Endothelial cell of umbilical vein (primary cell): ENCODE measurements at regions of chr6 and their contacts with region 1.

Region 1: DNA sequence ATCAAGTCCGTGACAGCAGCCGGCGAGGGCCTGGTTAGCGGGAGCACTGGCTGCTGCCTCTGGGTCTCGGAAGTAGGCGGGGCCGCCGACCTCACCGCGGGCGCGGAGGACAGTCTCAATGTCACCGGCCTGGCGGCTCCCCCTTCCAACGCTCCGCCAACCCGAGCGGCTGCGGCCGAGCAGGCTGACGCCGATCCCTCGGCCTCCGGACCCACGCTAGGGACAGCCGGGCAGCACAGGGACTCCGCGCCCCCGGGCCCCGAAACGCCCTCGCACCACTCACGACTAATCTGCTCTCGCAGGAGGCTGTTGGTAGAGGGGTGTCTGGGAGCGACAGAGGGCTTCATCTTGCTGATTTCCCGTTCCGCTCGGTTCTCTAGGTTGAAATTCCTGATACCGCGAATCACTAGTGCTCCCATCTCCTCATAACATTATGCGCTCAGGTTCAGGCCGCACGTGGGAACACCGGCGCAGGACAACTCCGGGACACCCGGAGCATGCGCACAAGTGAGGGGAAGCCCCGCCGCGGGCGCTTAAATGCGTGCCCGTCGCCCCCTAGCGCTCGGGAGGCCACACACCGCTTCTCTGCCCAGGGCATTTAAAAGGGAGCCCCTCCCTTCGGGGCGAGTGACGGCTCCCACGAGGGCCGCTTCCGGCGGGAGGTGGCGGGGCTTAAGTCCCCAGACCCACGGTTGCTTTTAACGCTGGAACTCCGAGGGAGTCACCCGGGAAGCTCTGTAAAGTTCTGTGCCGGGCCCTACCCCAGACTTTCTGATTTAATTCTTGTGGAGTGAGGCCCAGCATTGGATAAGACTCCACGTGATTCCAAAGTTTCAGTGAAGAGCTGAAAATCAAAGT is at the start of gene NDUFAF4:
- DNase-seq: peak; percentile 96
- H3K4me3 ChIP-seq: peak within 1 kb of the TSS; percentile 79 to 99 (median 91)
- H3K27ac ChIP-seq: peak within 1 kb of the TSS; percentile 95
- H3K4me1 ChIP-seq: peaks cover 25% of the 10 kb centered on the region
- H3K27me3 ChIP-seq: peaks cover 0 to 2% of the 10 kb centered on the region in 2 experiments
- CTCF ChIP-seq: peak; percentile 94 to 97
- POLR2A ChIP-seq: no peak
- total RNA-seq, gene NDUFAF4: 39.8 and 44.6 TPM in 2 replicates

Region 2: DNA sequence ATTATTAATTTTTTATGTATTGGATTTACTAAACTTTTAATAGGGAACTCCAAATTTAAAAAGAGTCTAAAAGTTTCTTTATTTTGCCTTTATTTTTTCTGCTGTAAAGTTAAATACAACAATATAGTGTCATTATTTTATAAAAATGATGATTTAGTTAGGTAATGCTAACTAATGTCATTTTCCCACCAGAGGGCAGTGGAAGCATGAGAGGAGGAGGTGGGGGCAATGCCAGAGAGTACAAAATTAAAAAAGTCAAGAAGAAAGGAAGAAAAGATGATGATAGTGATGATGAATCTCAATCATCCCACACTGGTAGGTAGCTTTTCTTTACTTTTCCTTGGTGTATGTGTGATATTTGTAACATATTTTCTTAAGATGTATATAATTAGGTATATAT is 354.9 kb before region 1 on chr6:
- CTCF ChIA-PET with region 1: no interaction called
- POLR2A ChIA-PET with region 1: no interaction called
- dilution Hi-C with region 1: no loop called
- intact Hi-C with region 1: loop called (anchors 2 kb)
- DNase-seq: no peak
- H3K4me3 ChIP-seq: no peak overlapping the region
- H3K27ac ChIP-seq: no peak overlapping the region
- H3K4me1 ChIP-seq: no peaks in the 10 kb centered on the region
- H3K27me3 ChIP-seq: no peaks in the 10 kb centered on the region
- CTCF ChIP-seq: peak in 1 of 2 donors; percentile 13
- POLR2A ChIP-seq: no peak

Region 3: DNA sequence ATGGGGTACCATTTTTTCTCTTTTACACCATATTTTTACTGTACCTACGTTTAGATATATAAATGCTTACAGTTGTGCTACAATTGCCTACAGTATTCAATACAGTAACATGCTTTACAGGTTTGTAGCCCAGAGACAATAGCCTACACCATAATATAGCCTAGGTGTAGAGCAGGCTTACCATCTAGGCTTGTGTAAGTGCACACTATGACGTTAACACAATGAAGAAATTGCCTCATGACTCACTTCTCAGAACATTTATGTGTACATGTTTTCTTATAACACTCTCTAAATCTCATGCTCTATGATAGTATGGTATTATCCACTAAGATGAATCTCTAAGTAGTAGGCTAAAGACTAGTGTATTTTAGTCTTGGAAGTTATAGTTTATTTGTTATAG is 73.9 kb before region 1 on chr6:
- CTCF ChIA-PET with region 1: no interaction called
- POLR2A ChIA-PET with region 1: no interaction called
- dilution Hi-C with region 1: no loop called
- intact Hi-C with region 1: no loop called
- DNase-seq: no peak
- H3K4me3 ChIP-seq: no peak overlapping the region
- H3K27ac ChIP-seq: no peak overlapping the region
- H3K4me1 ChIP-seq: no peaks in the 10 kb centered on the region
- H3K27me3 ChIP-seq: no peaks in the 10 kb centered on the region
- CTCF ChIP-seq: no peak
- POLR2A ChIP-seq: no peak

Region 4: GRCh38 chr6:96923871-96924493 is 26.4 kb after region 1 on chr6:
- CTCF ChIA-PET with region 1: interaction called, 12 read pairs
- POLR2A ChIA-PET with region 1: no interaction called
- dilution Hi-C with region 1: no loop called
- intact Hi-C with region 1: loop called (anchors 2 kb)
- DNase-seq: peak; percentile 14
- H3K4me3 ChIP-seq: peak overlapping the region in 2 of 3 experiments; percentile 13 to 61
- H3K27ac ChIP-seq: no peak overlapping the region
- H3K4me1 ChIP-seq: peaks cover 4% of the 10 kb centered on the region
- H3K27me3 ChIP-seq: peaks cover 29 to 72% of the 10 kb centered on the region in 2 experiments
- CTCF ChIP-seq: no peak
- POLR2A ChIP-seq: no peak

Region 5: DNA sequence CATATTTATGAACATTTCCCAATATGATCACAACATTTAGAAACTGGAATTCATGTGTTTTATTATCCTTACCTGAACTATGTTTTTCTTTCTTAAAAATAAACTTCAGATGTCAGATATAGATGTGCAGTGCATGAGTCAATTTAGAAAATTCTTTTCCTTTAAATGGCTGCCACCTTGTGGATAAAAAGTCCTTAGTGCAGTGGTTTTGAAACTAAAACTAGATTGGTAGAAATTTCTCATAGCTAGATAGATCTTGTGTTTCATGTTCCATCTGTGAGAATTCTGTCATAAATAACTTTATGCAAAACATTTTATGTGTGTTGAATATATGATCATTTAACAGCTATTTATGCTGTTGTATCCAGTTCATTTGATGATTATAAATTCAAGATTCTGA is 161.9 kb after region 1 on chr6:
- CTCF ChIA-PET with region 1: interaction called, 106 read pairs
- POLR2A ChIA-PET with region 1: no interaction called
- dilution Hi-C with region 1: no loop called
- intact Hi-C with region 1: loop called (anchors 1 kb)
- DNase-seq: peak; percentile 30
- H3K4me3 ChIP-seq: no peak overlapping the region
- H3K27ac ChIP-seq: no peak overlapping the region
- H3K4me1 ChIP-seq: no peaks in the 10 kb centered on the region
- H3K27me3 ChIP-seq: peaks cover 10 to 13% of the 10 kb centered on the region in 2 experiments
- CTCF ChIP-seq: peak; percentile 13 to 21
- POLR2A ChIP-seq: no peak

Region 6: GRCh38 chr6:97282726-97283617 is 385.4 kb after region 1 on chr6 and contains the start of gene MMS22L:
- CTCF ChIA-PET with region 1: no interaction called
- POLR2A ChIA-PET with region 1: no interaction called
- dilution Hi-C with region 1: no loop called
- intact Hi-C with region 1: loop called (anchors 5 kb)
- DNase-seq: peak; percentile 95
- H3K4me3 ChIP-seq: peak within 1 kb of the TSS; percentile 75 to 93 (median 86)
- H3K27ac ChIP-seq: peak within 1 kb of the TSS; percentile 60
- H3K4me1 ChIP-seq: peaks cover 21% of the 10 kb centered on the region
- H3K27me3 ChIP-seq: no peaks in the 10 kb centered on the region
- CTCF ChIP-seq: no peak
- POLR2A ChIP-seq: no peak
- total RNA-seq, gene MMS22L: 19.3 and 22.7 TPM in 2 replicates